ENCODE measurements at regions of chr5 and their contacts with region 1.

Region 1: DNA sequence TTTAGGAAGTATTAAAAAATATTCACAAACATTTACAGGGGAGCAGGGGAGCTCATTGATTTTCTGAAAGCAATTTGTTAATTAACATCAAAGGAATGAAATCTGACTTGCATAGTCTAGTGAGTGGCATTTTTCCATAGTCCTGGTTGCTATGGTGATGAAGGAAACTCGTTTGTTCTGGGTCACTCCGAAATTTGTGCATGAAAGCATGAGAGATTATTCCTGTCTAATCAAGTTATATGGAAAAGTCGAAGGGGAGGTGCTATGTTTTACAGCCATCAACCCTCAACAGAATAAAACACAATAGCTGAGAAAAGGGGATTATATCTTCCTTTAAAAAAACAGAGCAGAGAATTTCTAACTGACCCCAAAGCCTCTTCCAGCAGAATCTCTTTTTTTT is 1495.7 kb upstream of the WWC1 start:
- DNase-seq: no peak
- ATAC-seq: no peak
- H3K4me3 ChIP-seq: no peak overlapping the region
- H3K27ac ChIP-seq: no peak overlapping the region
- H3K4me1 ChIP-seq: no peaks in the 10 kb centered on the region
- H3K27me3 ChIP-seq: no peaks in the 10 kb centered on the region
- CTCF ChIP-seq: no peak
- POLR2A ChIP-seq: no peak
- RAD21 ChIP-seq: no peak

Region 2: GRCh38 chr5:166772770-166773169 is 23.0 kb before region 1 on chr5:
- CTCF ChIA-PET with region 1: interaction called, 12 read pairs
- POLR2A ChIA-PET with region 1: no interaction called
- dilution Hi-C with region 1: no loop called
- in situ Hi-C with region 1: no loop called
- intact Hi-C with region 1: no loop called
- DNase-seq: no peak
- ATAC-seq: no peak
- H3K4me3 ChIP-seq: no peak overlapping the region
- H3K27ac ChIP-seq: no peak overlapping the region
- H3K4me1 ChIP-seq: no peaks in the 10 kb centered on the region
- H3K27me3 ChIP-seq: no peaks in the 10 kb centered on the region
- CTCF ChIP-seq: no peak
- POLR2A ChIP-seq: no peak
- RAD21 ChIP-seq: no peak

Measured in IMR-90 (cell line).